Activated CD4-positive, alpha-beta memory T cell treated with anti-CD3 and anti-CD28 coated beads for 36 hours (primary cell): ENCODE measurements at regions of chr2 and their contacts with region 1.

Region 1: GRCh38 chr2:71068218-71069035 is at the start of gene NAGK:
- DNase-seq: peak; percentile 98
- H3K4me3 Mint-ChIP-seq: peak within 1 kb of the TSS; percentile 94
- H3K27ac Mint-ChIP-seq: peak within 1 kb of the TSS; percentile 96
- H3K4me1 Mint-ChIP-seq: peaks cover 54% of the 10 kb centered on the region
- H3K27me3 Mint-ChIP-seq: no peaks in the 10 kb centered on the region
- total RNA-seq, gene NAGK: 47.5 to 54.7 TPM

Region 2: GRCh38 chr2:71018625-71019024 is 49.8 kb before region 1 on chr2:
- CTCF ChIA-PET with region 1: interaction called, 5 read pairs
- POLR2A ChIA-PET with region 1: no interaction called
- intact Hi-C with region 1: loop called (anchors 2 kb)
- DNase-seq: no peak
- H3K4me3 Mint-ChIP-seq: no peak overlapping the region
- H3K27ac Mint-ChIP-seq: no peak overlapping the region
- H3K4me1 Mint-ChIP-seq: peaks cover 7% of the 10 kb centered on the region
- H3K27me3 Mint-ChIP-seq: no peaks in the 10 kb centered on the region

Region 3: GRCh38 chr2:71100195-71100964 is 32.0 kb after region 1 on chr2:
- CTCF ChIA-PET with region 1: interaction called, 18 read pairs
- POLR2A ChIA-PET with region 1: no interaction called
- intact Hi-C with region 1: no loop called
- DNase-seq: peak; percentile 69
- H3K4me3 Mint-ChIP-seq: no peak overlapping the region
- H3K27ac Mint-ChIP-seq: no peak overlapping the region
- H3K4me1 Mint-ChIP-seq: no peaks in the 10 kb centered on the region
- H3K27me3 Mint-ChIP-seq: no peaks in the 10 kb centered on the region

Region 4: DNA sequence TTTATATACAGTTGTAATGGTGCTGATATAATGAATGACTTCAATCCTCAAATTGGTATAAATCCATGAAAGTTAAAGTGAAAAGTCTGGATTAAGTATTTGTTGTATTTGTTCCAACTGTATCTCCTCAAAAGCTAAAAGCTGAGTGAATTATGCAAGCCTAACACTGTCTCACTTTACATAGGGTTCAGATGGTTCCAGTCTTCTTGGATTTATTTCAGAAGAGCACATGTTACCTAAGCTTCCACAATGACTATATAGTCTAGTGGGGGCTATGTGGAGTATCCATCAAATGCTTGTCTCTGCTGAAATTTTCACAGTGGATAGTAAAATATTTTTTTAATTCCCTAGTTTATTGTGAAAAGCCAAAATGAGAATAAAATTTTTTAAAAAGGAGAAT is 48.6 kb after region 1 on chr2:
- CTCF ChIA-PET with region 1: no interaction called
- POLR2A ChIA-PET with region 1: no interaction called
- intact Hi-C with region 1: no loop called
- DNase-seq: no peak
- H3K4me3 Mint-ChIP-seq: no peak overlapping the region
- H3K27ac Mint-ChIP-seq: no peak overlapping the region
- H3K4me1 Mint-ChIP-seq: peaks cover 6% of the 10 kb centered on the region
- H3K27me3 Mint-ChIP-seq: no peaks in the 10 kb centered on the region

Region 5: GRCh38 chr2:71226965-71227560 is 158.6 kb after region 1 on chr2 and contains the start of gene PAIP2B:
- CTCF ChIA-PET with region 1: interaction called, 3 read pairs
- POLR2A ChIA-PET with region 1: no interaction called
- intact Hi-C with region 1: loop called (anchors 1 kb)
- DNase-seq: peak; percentile 99
- H3K4me3 Mint-ChIP-seq: peak within 1 kb of the TSS; percentile 97
- H3K27ac Mint-ChIP-seq: peak within 1 kb of the TSS; percentile 82
- H3K4me1 Mint-ChIP-seq: peaks cover 10% of the 10 kb centered on the region
- H3K27me3 Mint-ChIP-seq: peaks cover 2% of the 10 kb centered on the region
- total RNA-seq, gene PAIP2B: 2.2 TPM